ENCODE measurements at regions of chr16 and their contacts with region 1.

Region 1: GRCh38 chr16:27318392-27319226 is 4.8 kb downstream of the IL4R start:
- DNase-seq: peak; percentile 58
- H3K4me3 Mint-ChIP-seq: peak overlapping the region; percentile 94
- H3K27ac Mint-ChIP-seq: peak overlapping the region; percentile 99
- H3K4me1 Mint-ChIP-seq: peaks cover 71% of the 10 kb centered on the region
- H3K27me3 Mint-ChIP-seq: no peaks in the 10 kb centered on the region

Region 2: DNA sequence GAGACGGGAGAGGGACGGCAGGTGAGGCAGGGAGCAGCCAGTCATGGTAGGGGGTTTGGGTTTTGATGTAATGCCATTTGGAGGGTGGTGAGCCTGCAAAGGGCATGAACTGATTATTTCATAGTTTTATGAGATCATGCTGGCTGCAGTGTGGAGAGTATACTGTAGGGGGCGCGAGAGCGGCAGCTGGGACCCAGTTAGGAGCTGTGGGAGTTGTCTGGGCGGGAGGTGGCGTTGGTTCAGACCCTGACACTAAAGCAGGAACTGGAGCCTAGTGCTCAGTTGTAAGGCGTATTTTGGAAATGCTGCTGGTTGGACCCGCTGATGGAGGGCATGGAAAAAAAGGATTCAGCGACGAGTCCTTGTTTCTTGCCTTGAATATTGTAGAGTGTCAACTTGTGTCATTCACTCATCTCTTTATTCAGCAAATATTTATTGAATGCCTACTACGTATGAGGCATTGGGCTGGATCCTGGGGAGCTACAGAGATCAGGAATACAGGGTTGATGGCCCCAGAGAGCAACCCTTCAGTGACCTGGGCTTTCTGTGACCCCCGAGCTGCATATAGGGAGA is 139.0 kb before region 1 on chr16:
- intact Hi-C with region 1: loop called (anchors 2 kb)
- DNase-seq: peak; percentile 78
- H3K4me3 Mint-ChIP-seq: no peak overlapping the region
- H3K27ac Mint-ChIP-seq: no peak overlapping the region
- H3K4me1 Mint-ChIP-seq: peaks cover 32% of the 10 kb centered on the region
- H3K27me3 Mint-ChIP-seq: peaks cover 11% of the 10 kb centered on the region

Region 3: DNA sequence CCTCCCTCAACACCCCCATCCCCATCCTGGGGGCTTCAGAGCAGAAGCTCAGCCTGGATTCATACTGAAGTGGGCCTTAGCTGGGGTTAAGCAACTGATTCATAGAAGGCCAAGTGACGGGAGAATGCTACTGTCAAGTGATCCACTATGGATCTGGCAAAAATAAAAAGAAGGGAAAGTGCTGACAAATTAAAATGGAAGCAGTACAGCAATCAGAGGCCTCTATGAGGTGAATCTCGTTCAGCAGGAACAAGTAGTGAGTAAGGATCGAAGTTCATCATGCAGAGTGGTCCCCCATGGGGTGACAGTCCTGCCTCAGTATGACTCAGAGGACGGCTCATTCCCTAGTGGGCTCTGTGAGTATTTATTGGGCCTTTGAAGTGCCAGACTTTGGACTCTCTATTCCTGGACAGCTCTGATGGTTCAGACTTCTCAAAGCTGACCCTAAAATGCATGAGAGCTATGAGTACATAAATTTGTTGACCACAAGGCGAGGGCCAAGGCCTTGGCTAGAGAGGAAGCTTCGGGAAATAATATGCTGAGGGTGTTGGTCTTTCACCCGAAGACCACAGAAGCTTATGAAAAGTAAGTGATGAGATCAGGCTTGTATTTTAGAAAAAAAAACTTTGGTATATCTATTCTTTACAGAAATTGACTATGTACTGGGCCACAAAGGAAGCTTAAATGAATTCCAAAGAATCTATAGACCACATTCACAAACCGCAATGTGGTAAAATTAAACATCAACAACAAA is 44.8 kb before region 1 on chr16:
- intact Hi-C with region 1: loop called (anchors 1 kb)
- DNase-seq: no peak
- H3K4me3 Mint-ChIP-seq: peak overlapping the region; percentile 32
- H3K27ac Mint-ChIP-seq: peak overlapping the region; percentile 87
- H3K4me1 Mint-ChIP-seq: peaks cover 65% of the 10 kb centered on the region
- H3K27me3 Mint-ChIP-seq: no peaks in the 10 kb centered on the region

Region 4: DNA sequence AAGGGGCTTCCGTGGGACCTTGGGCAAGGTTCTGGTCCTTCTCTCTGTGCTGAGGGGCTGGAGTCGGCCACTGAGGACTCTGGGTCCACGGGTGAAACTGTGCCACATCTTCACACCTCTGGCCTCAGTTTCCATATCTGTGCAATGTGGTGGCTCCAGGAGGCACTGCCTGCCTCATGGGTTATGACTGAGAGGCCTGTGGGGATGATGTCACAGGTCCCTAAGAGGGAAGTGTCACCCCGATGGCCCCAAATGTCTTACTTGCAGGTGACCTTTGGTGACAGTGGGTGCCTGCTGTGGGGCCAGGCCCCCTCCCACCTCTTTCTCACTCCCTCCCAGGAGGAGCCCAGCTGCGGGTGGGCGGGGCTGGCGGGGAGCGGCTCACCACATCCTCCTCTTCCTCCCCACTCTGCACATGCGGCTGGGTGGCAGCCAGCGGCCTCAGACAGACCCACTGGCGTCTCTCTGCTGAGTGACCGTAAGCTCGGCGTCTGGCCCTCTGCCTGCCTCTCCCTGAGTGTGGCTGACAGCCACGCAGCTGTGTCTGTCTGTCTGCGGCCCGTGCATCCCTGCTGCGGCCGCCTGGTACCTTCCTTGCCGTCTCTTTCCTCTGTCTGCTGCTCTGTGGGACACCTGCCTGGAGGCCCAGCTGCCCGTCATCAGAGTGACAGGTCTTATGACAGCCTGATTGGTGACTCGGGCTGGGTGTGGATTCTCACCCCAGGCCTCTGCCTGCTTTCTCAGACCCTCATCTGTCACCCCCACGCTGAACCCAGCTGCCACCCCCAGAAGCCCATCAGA is 83.4 kb after region 1 on chr16 and contains the start of gene IL21R:
- intact Hi-C with region 1: loop called (anchors 1 kb)
- DNase-seq: peak; percentile 78
- H3K4me3 Mint-ChIP-seq: peak within 1 kb of the TSS; percentile 100
- H3K27ac Mint-ChIP-seq: peak within 1 kb of the TSS; percentile 100
- H3K4me1 Mint-ChIP-seq: peaks cover 68% of the 10 kb centered on the region
- H3K27me3 Mint-ChIP-seq: no peaks in the 10 kb centered on the region
- total RNA-seq, gene IL21R: 101 and 104 TPM in 2 replicates

Region 5: GRCh38 chr16:27461483-27462171 is 143.0 kb after region 1 on chr16:
- intact Hi-C with region 1: loop called (anchors 1 kb)
- DNase-seq: no peak
- H3K4me3 Mint-ChIP-seq: no peak overlapping the region
- H3K27ac Mint-ChIP-seq: no peak overlapping the region
- H3K4me1 Mint-ChIP-seq: peaks cover 22% of the 10 kb centered on the region
- H3K27me3 Mint-ChIP-seq: no peaks in the 10 kb centered on the region

Region 6: DNA sequence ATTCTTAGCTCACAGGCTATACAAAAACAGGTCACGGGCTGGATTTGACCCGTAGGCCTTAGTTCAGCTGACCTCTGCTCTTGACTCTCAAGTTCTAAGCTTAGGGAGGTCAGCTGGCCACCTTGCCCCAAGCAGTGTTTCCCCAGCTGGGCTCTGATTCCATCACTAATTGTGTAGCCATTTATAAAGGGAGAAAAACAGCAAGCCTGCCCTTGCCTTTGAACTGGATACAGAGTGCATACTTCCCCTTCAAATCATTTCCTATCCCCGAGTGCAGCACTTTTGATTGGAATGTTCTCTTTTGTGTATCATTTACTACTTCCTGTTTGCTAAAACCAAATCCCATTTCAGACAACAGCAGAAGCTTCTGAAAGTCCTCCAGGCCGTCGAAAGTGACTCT is 384.9 kb after region 1 on chr16:
- intact Hi-C with region 1: no loop called
- DNase-seq: no peak
- H3K4me3 Mint-ChIP-seq: no peak overlapping the region
- H3K27ac Mint-ChIP-seq: no peak overlapping the region
- H3K4me1 Mint-ChIP-seq: no peaks in the 10 kb centered on the region
- H3K27me3 Mint-ChIP-seq: no peaks in the 10 kb centered on the region

Measured in activated T-helper 1 cell treated with anti-CD3 and anti-CD28 coated beads, Interleukin-12 subunit alpha, Interleukin-12 subunit beta, Interleukin-2, Interleukin-4 antibody, amounts not matched to agents 30 ng/mL and 10 ng/mL and 1 ng/mL, durations not matched to agents 14 hours and 24 hours and 36 hours (primary cell).